ENCODE measurements at regions of chr15 and their contacts with region 1.

Region 1: DNA sequence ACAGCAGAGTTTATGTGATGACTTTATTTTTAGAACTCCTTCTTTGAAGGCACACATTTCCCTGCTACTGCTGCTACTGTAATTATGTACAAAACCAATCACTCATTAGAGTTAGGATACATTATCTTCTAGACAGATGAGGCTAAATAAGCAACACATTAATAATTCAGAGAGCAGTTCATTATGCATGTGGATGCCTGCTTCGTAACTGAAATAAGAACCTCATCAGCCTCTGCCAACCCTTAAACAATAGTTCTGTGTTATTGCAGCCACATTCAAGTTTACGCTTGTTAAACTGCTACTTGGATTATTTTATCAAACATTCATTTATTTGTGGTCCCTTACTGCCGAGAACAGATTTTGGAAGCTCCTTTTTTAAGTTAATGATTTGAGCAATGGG is 52.5 kb upstream of the C15orf61 start:
- DNase-seq: no peak
- H3K4me3 ChIP-seq: no peak overlapping the region
- H3K27ac ChIP-seq: no peak overlapping the region
- H3K4me1 ChIP-seq: no peaks in the 10 kb centered on the region
- H3K27me3 ChIP-seq: no peaks in the 10 kb centered on the region
- CTCF ChIP-seq: no peak

Region 2: GRCh38 chr15:67254238-67255175 is 213.9 kb before region 1 on chr15 and contains the starts of genes AAGAB and IQCH:
- intact Hi-C with region 1: no loop called
- DNase-seq: peak; percentile 97 to 99 (median 98)
- H3K4me3 ChIP-seq: peak within 1 kb of the TSS; percentile 81 to 95 (median 87)
- H3K27ac ChIP-seq: peak within 1 kb of the TSS; percentile 83 to 86
- H3K4me1 ChIP-seq: peaks cover 0 to 4% (median 3%) of the 10 kb centered on the region in 3 donors
- H3K27me3 ChIP-seq: no peaks in the 10 kb centered on the region
- CTCF ChIP-seq: peak; percentile 7
- total RNA-seq, gene AAGAB: 44.0 TPM
- total RNA-seq, gene IQCH: 7.7 TPM

Region 3: GRCh38 chr15:67839929-67840748 is 371.7 kb after region 1 on chr15 and contains the start of gene RNU6-1:
- intact Hi-C with region 1: loop called (anchors 10 kb)
- DNase-seq: peak; percentile 93 to 98 (median 96)
- H3K4me3 ChIP-seq: peak within 1 kb of the TSS; percentile 78 to 82 (median 80)
- H3K27ac ChIP-seq: peak within 1 kb of the TSS; percentile 94 to 99
- H3K4me1 ChIP-seq: peaks cover 3 to 30% (median 18%) of the 10 kb centered on the region in 3 donors
- H3K27me3 ChIP-seq: peaks cover 3% of the 10 kb centered on the region
- CTCF ChIP-seq: no peak
- total RNA-seq, gene RNU6-1: not detected